A549 (cell line): ENCODE measurements at regions of chr9 and their contacts with region 1.

Region 1: DNA sequence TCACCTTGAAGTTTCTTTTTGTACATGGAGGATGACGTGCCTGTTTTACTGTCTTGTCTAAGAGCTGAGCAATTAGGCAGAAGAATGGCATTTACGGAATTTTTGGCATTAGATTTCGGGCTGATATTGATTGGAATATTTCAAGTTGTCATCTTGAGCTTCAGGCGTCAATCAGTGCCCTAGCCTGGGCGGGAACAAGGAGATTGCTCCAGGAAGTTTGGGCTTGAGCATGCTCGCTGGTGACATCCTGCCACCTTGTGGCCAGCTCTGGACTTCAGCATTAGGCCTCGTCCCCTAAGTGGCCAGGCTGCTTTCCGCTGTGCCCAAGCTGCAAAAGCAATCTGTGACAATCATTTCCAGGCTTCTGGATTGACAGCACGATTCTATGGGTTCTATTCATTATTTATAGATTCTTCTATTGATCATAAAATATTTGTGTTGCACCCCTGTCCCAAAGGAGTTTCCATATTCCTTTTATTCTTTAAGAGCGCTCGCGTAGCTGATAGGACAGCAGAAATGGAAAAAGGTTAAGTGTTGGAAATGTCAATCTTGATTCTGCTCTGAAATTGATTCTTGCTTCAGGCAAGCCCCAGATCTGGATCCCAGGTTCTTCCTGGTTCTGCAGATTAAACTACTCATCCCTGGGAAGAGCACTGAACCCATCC is 79.3 kb downstream of the SLC28A3 start:
- DNase-seq: peak; percentile 70 to 82
- ATAC-seq: peak; percentile 93 to 99
- H3K4me3 ChIP-seq: no peak overlapping the region
- H3K27ac ChIP-seq: no peak overlapping the region
- H3K4me1 ChIP-seq: no peaks in the 10 kb centered on the region
- CTCF ChIP-seq: peak; percentile 82
- EP300 ChIP-seq: no peak
- POLR2A ChIP-seq: no peak
- RAD21 ChIP-seq: peak; percentile 83 to 91

Region 2: DNA sequence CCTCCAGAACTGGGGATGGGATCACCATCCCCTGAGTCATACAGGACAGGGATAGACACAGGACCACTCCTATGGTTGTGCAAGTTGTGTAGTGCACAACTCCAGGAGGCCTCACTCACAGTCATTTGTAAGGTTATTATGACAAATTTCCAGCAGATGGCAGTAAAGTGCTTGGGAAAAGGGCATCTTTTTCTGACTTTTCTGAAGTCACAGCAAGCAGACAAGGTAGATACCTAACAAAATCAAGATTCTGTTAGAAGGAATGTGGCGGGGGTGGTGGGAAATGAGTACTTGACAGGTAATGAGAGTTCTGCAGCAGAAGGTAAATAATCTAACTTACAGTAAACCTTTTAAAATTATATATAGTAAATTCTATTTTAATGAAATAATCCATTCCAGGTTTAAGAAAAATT is 323.3 kb before region 1 on chr9:
- CTCF ChIA-PET with region 1: interaction called, 60 read pairs
- POLR2A ChIA-PET with region 1: no interaction called
- DNase-seq: peak; percentile 56 to 70
- ATAC-seq: peak; percentile 84 to 86
- H3K4me3 ChIP-seq: no peak overlapping the region
- H3K27ac ChIP-seq: no peak overlapping the region
- H3K4me1 ChIP-seq: peaks cover 23% of the 10 kb centered on the region; the same call in 2 of the 3 replicates
- CTCF ChIP-seq: peak; percentile 84
- EP300 ChIP-seq: no peak
- POLR2A ChIP-seq: no peak
- RAD21 ChIP-seq: peak; percentile 85 to 88

Region 3: DNA sequence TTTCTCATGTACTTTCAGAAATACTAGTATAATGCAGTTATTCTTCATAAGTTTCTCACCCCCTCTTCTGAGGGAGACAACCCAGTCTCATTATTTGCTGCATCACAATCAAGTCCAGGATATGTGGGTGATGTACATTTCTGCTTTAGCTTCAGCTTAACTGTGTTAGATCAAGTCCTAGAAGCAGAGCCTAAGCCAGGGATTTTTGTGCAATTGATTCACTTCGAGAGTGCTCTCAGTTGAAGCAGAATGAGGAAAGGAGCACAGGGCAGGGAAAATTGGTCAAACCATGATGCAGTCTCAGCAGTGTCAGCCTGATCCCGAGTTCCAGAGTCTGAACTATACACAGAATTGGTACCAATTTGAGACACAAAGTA is 296.3 kb before region 1 on chr9:
- CTCF ChIA-PET with region 1: interaction called, 11 read pairs
- POLR2A ChIA-PET with region 1: no interaction called
- DNase-seq: no peak
- ATAC-seq: peak; percentile 52 to 58
- H3K4me3 ChIP-seq: no peak overlapping the region
- H3K27ac ChIP-seq: peak overlapping the region; percentile 72 to 78
- H3K4me1 ChIP-seq: peaks cover 36% of the 10 kb centered on the region
- CTCF ChIP-seq: no peak
- EP300 ChIP-seq: no peak
- POLR2A ChIP-seq: no peak
- RAD21 ChIP-seq: no peak

Region 4: DNA sequence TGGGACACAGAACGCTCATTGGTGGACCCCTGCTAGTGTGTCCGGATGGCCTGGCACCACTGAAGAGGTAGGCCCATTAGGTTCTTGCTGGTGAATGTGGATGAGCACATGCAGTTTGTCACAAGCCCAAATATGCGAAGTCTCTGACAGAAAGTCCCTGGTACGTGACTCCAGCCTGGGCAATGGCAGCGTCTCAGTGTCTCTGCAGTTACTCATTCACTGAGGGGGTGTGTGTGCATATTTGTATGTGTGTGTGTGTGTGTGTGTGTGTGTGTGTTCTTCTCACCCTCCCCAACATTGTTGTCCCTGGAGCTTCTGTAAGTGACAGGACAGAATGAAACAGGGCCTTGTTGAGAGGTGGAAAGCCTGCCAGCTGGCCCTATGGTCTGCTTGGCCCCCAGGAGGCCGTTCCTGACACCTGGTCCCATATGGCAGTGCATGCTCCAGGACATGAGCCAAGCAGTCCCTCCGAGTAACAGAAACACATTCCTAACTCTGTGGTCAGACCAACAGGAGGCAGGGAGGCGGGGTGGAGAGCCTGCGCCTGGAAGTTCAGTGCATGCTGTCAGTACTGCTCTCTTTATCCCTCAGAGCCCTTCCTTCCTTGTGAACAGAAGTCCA is 90.6 kb before region 1 on chr9:
- CTCF ChIA-PET with region 1: interaction called, 10 read pairs
- POLR2A ChIA-PET with region 1: no interaction called
- DNase-seq: peak; percentile 30 to 37
- ATAC-seq: peak; percentile 58 to 73
- H3K4me3 ChIP-seq: no peak overlapping the region
- H3K27ac ChIP-seq: no peak overlapping the region
- H3K4me1 ChIP-seq: no peaks in the 10 kb centered on the region
- CTCF ChIP-seq: no peak
- EP300 ChIP-seq: no peak
- POLR2A ChIP-seq: no peak
- RAD21 ChIP-seq: no peak

Region 5: GRCh38 chr9:84244850-84245249 is 16.4 kb before region 1 on chr9:
- CTCF ChIA-PET with region 1: interaction called, 11 read pairs
- POLR2A ChIA-PET with region 1: no interaction called
- DNase-seq: no peak
- ATAC-seq: no peak
- H3K4me3 ChIP-seq: no peak overlapping the region
- H3K27ac ChIP-seq: no peak overlapping the region
- H3K4me1 ChIP-seq: no peaks in the 10 kb centered on the region
- CTCF ChIP-seq: no peak
- EP300 ChIP-seq: no peak
- POLR2A ChIP-seq: no peak
- RAD21 ChIP-seq: no peak

Region 6: GRCh38 chr9:84278130-84278529 is 16.9 kb after region 1 on chr9:
- CTCF ChIA-PET with region 1: interaction called, 15 read pairs
- POLR2A ChIA-PET with region 1: no interaction called
- DNase-seq: no peak
- ATAC-seq: no peak
- H3K4me3 ChIP-seq: no peak overlapping the region
- H3K27ac ChIP-seq: no peak overlapping the region
- H3K4me1 ChIP-seq: no peaks in the 10 kb centered on the region
- CTCF ChIP-seq: no peak
- EP300 ChIP-seq: no peak
- POLR2A ChIP-seq: no peak
- RAD21 ChIP-seq: no peak